ENCODE measurements at regions of chr14 and their contacts with region 1.

Region 1: GRCh38 chr14:24710403-24711112 is 76.6 kb upstream of the GZMB start:
- DNase-seq: peak; percentile 77
- ATAC-seq: peak; percentile 81
- H3K4me3 Mint-ChIP-seq: no peak overlapping the region
- H3K27ac Mint-ChIP-seq: no peak overlapping the region
- H3K4me1 Mint-ChIP-seq: peaks cover 18% of the 10 kb centered on the region
- H3K27me3 Mint-ChIP-seq: peaks cover 13% of the 10 kb centered on the region

Region 2: DNA sequence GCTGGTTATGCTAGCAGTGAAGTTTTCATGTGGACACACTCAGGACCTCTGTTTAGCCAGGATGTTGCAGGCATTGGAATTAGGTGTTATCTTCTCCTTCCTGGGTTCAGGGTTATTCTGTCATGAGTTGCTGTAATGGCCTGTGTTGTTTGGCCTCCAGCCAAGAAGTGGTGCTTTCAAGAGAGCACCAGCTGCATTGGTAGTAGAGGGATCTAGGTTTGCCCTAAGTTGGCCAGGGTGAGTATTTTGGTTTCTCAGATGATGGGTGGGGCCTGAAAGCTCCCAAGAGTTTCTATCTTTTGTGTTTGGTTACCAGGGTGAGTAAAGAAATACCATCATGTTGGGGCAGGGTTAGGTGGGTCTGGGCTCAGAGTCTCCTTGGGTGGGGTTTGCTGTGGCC is 98.4 kb before region 1 on chr14:
- CTCF ChIA-PET with region 1: interaction called, 42 read pairs
- POLR2A ChIA-PET with region 1: no interaction called
- DNase-seq: no peak
- ATAC-seq: no peak
- H3K4me3 Mint-ChIP-seq: no peak overlapping the region
- H3K27ac Mint-ChIP-seq: no peak overlapping the region
- H3K4me1 Mint-ChIP-seq: peaks cover 62% of the 10 kb centered on the region
- H3K27me3 Mint-ChIP-seq: no peaks in the 10 kb centered on the region

Region 3: GRCh38 chr14:24673534-24674203 is 36.9 kb before region 1 on chr14:
- CTCF ChIA-PET with region 1: interaction called, 50 read pairs
- POLR2A ChIA-PET with region 1: no interaction called
- DNase-seq: peak; percentile 91
- ATAC-seq: peak; percentile 84
- H3K4me3 Mint-ChIP-seq: peak overlapping the region; percentile 75
- H3K27ac Mint-ChIP-seq: peak overlapping the region; percentile 99
- H3K4me1 Mint-ChIP-seq: peaks cover 90% of the 10 kb centered on the region
- H3K27me3 Mint-ChIP-seq: no peaks in the 10 kb centered on the region

Region 4: GRCh38 chr14:24690492-24690891 is 20.1 kb before region 1 on chr14:
- CTCF ChIA-PET with region 1: interaction called, 87 read pairs
- POLR2A ChIA-PET with region 1: no interaction called
- DNase-seq: peak; percentile 59
- ATAC-seq: no peak
- H3K4me3 Mint-ChIP-seq: no peak overlapping the region
- H3K27ac Mint-ChIP-seq: peak overlapping the region; percentile 54
- H3K4me1 Mint-ChIP-seq: peaks cover 46% of the 10 kb centered on the region
- H3K27me3 Mint-ChIP-seq: no peaks in the 10 kb centered on the region

Region 5: DNA sequence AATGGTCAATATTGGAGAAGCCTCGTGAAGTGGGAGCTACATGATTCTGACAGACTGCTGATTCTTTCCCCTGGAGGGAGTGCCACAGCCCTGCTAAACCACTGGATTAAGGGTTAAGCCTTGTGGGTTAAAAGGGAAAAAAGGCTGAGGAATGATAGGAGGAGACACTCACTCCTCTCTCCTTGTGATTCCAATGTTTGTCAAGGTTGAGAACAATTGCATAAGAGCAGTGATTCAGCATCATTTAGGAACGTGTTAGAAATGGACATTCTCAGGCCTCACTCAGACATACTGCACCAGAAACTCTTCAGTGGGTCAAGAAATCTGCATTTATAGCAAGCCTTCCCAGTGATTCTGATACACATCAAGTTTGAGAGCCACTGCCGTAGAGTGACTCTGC is 11.2 kb after region 1 on chr14:
- CTCF ChIA-PET with region 1: interaction called, 26 read pairs
- POLR2A ChIA-PET with region 1: no interaction called
- DNase-seq: no peak
- ATAC-seq: no peak
- H3K4me3 Mint-ChIP-seq: no peak overlapping the region
- H3K27ac Mint-ChIP-seq: no peak overlapping the region
- H3K4me1 Mint-ChIP-seq: no peaks in the 10 kb centered on the region
- H3K27me3 Mint-ChIP-seq: peaks cover 43% of the 10 kb centered on the region

Region 6: DNA sequence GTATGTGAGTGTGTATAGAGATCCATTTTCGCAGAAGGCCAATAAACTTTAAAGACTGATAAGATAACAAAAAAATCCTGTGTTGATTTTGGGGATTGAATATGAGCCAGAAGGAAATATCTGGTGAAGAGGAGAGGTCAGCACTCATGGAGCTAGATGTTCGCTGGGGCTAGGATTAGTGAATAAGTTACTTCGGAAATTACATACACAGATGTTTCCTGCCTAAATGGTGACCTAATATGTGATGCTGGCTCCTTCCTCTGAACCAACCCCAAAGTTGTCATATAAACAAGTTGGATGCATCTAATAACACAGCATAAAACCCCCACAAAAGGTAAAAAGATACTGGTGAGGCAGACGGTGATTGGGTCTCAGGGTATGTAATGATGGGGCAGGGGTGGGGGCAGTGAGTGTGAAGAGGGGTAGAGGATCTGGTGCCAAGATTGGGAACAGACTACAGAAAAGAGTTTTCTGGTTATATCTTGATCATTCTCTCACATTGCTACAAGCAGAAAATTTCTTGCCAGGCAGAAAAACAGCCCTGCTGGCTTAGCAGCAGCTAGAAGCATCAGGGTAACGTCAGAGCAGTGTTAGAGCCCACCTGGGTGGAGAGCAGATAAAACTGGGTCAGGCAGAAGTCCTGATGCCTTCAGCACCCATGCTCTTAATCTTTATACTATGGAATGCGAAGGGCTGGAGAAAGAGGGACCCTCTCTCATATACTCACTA is 63.8 kb after region 1 on chr14:
- CTCF ChIA-PET with region 1: no interaction called
- POLR2A ChIA-PET with region 1: no interaction called
- DNase-seq: no peak
- ATAC-seq: no peak
- H3K4me3 Mint-ChIP-seq: no peak overlapping the region
- H3K27ac Mint-ChIP-seq: no peak overlapping the region
- H3K4me1 Mint-ChIP-seq: no peaks in the 10 kb centered on the region
- H3K27me3 Mint-ChIP-seq: peaks cover 26% of the 10 kb centered on the region

Region 7: GRCh38 chr14:24828486-24828885 is 117.9 kb after region 1 on chr14:
- CTCF ChIA-PET with region 1: no interaction called
- POLR2A ChIA-PET with region 1: no interaction called
- DNase-seq: no peak
- ATAC-seq: no peak
- H3K4me3 Mint-ChIP-seq: no peak overlapping the region
- H3K27ac Mint-ChIP-seq: no peak overlapping the region
- H3K4me1 Mint-ChIP-seq: no peaks in the 10 kb centered on the region
- H3K27me3 Mint-ChIP-seq: peaks cover 11% of the 10 kb centered on the region

Region 8: DNA sequence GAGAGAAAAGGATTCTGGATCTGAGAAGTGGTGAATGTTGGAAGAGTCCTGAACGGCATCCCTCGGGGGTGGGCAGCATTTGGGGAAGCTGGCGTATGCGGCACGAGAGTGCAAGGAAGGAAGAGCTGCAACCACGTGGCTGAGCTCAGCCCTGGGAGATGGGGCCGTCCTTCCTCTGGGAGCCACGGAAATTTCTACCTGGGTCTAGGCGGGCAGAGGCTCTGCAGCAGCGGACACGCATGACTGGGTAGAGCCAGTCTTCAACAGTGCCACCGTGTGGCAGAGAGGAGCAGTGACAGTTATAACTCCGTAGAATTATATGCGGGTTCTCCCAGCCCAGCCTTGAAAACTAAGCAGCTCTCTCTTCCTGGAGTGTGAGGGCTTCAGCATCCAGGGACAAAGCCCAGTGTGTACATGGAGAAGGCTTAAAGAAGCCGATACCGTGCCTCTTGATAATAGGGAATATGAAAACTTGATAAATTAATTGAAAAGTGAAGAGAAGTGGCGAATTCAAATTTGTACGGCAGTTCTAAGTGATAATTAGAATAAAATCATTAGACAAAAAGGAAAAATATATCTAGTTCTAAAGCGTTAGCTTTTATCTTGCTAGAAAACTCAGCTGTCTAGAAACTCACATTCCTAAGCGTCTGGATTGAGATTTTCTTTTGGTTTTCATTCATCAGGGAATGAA is 422.3 kb after region 1 on chr14:
- CTCF ChIA-PET with region 1: interaction called, 34 read pairs
- POLR2A ChIA-PET with region 1: no interaction called
- DNase-seq: peak; percentile 63
- ATAC-seq: peak; percentile 90
- H3K4me3 Mint-ChIP-seq: no peak overlapping the region
- H3K27ac Mint-ChIP-seq: no peak overlapping the region
- H3K4me1 Mint-ChIP-seq: no peaks in the 10 kb centered on the region
- H3K27me3 Mint-ChIP-seq: peaks cover 15% of the 10 kb centered on the region

Measured in activated CD8-positive, alpha-beta T cell treated with anti-CD3 and anti-CD28 coated beads, Interleukin-2, amount 10 ng/mL, durations not matched to agents 7 days and 5 days (primary cell).